Endothelial cell of umbilical vein (primary cell): ENCODE measurements at regions of chr19 and their contacts with region 1.

Region 1: DNA sequence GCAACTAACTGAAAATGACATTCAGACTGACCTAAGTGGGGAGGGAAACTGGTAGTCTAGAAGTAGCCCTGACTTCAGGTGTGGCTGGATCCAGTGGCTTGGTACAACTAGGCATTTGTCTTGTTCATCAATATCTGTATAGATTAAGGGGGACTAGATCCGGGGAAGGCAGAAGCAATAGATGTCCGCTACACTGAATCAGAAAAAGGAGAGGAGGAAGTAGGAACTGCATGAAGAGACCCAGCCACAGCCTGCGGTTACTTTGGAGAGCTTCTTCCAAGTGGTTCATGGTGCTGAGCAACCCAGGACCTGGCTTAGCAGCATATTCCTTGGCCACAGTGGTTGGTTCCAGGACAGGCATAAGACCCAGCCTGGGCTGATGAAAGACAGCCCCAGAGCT is 9.9 kb upstream of the PRODH2 start:
- DNase-seq: no peak
- H3K4me3 ChIP-seq: no peak overlapping the region
- H3K27ac ChIP-seq: no peak overlapping the region
- H3K4me1 ChIP-seq: no peaks in the 10 kb centered on the region
- H3K27me3 ChIP-seq: no peaks in the 10 kb centered on the region
- CTCF ChIP-seq: no peak
- POLR2A ChIP-seq: no peak

Region 2: GRCh38 chr19:35657904-35658700 is 164.5 kb before region 1 on chr19:
- CTCF ChIA-PET with region 1: no interaction called
- POLR2A ChIA-PET with region 1: no interaction called
- dilution Hi-C with region 1: no loop called
- intact Hi-C with region 1: no loop called
- DNase-seq: no peak
- H3K4me3 ChIP-seq: no peak overlapping the region
- H3K27ac ChIP-seq: no peak overlapping the region
- H3K4me1 ChIP-seq: no peaks in the 10 kb centered on the region
- H3K27me3 ChIP-seq: no peaks in the 10 kb centered on the region
- CTCF ChIP-seq: no peak
- POLR2A ChIP-seq: no peak

Region 3: GRCh38 chr19:35693830-35694599 is 128.6 kb before region 1 on chr19:
- CTCF ChIA-PET with region 1: interaction called, 54 read pairs
- POLR2A ChIA-PET with region 1: no interaction called
- dilution Hi-C with region 1: no loop called
- intact Hi-C with region 1: loop called (anchors 1 kb)
- DNase-seq: peak; percentile 78
- H3K4me3 ChIP-seq: no peak overlapping the region
- H3K27ac ChIP-seq: no peak overlapping the region
- H3K4me1 ChIP-seq: no peaks in the 10 kb centered on the region
- H3K27me3 ChIP-seq: no peaks in the 10 kb centered on the region
- CTCF ChIP-seq: peak; percentile 97
- POLR2A ChIP-seq: no peak

Region 4: GRCh38 chr19:35748106-35749020 is 74.2 kb before region 1 on chr19 and contains the start of gene LIN37:
- CTCF ChIA-PET with region 1: interaction called, 11 read pairs
- POLR2A ChIA-PET with region 1: no interaction called
- dilution Hi-C with region 1: no loop called
- intact Hi-C with region 1: loop called (anchors 1 kb)
- DNase-seq: peak; percentile 100
- H3K4me3 ChIP-seq: peak within 1 kb of the TSS; percentile 78 to 90 (median 81)
- H3K27ac ChIP-seq: peak within 1 kb of the TSS; percentile 58
- H3K4me1 ChIP-seq: peaks cover 19% of the 10 kb centered on the region
- H3K27me3 ChIP-seq: no peaks in the 10 kb centered on the region
- CTCF ChIP-seq: no peak
- POLR2A ChIP-seq: peak; percentile 94
- total RNA-seq, gene LIN37: 11.3 and 15.5 TPM in 2 replicates